Ovary (tissue), 10 donors: ENCODE measurements at regions of chr20 and their contacts with region 1.

Region 1: GRCh38 chr20:37790900-37791299 is 97.1 kb downstream of the CTNNBL1 start:
- DNase-seq: no peak
- H3K4me3 ChIP-seq: no peak overlapping the region
- H3K27ac ChIP-seq: no peak overlapping the region
- H3K4me1 ChIP-seq: no peaks in the 10 kb centered on the region
- H3K27me3 ChIP-seq: no peaks in the 10 kb centered on the region
- CTCF ChIP-seq: no peak
- EP300 ChIP-seq: no peak
- POLR2A ChIP-seq: no peak

Region 2: GRCh38 chr20:36835453-36836198 is 955.3 kb before region 1 on chr20:
- intact Hi-C with region 1: loop called in 1 of 4 experiments (anchors 5 kb)
- DNase-seq: peak; percentile 92 to 96 (median 94)
- H3K4me3 ChIP-seq: no peak overlapping the region
- H3K27ac ChIP-seq: peak overlapping the region; percentile 74
- H3K4me1 ChIP-seq: peaks cover 29% of the 10 kb centered on the region
- H3K27me3 ChIP-seq: no peaks in the 10 kb centered on the region
- CTCF ChIP-seq: no peak
- EP300 ChIP-seq: no peak
- POLR2A ChIP-seq: peak; percentile 61

Region 3: DNA sequence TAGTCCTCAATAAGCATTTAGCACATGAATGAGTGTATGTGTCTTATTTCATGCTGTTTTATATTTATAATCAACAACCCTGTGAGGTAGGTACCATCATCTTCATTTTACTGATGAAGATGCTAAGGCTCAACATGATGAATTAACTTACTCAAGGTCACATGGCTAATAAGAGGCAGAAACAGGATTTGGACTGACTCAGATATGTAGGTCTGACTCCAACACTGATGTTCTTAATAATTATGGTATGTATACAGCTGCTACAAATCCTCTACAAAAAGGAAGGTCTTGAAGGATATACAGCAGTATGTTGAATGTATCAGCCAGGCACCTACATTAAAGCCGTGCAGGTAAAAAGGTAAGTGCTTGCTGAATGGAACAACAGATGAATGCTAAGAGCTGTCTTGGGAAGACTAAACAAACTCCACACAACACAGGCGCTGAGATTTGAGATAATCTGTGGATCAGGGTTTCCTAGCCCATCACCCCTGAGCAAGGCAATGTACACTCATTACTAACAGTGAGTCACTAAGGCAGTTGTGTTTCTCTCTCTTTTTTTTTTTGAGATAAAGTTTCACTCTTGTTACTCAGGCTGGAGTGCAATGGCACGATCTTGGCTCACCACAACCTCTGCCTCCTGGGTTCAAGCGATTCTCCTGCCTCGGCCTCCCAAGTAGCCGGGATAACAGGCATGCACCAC is 210.4 kb after region 1 on chr20:
- intact Hi-C with region 1: no loop called
- DNase-seq: no peak
- H3K4me3 ChIP-seq: no peak overlapping the region
- H3K27ac ChIP-seq: no peak overlapping the region
- H3K4me1 ChIP-seq: peaks cover 6% of the 10 kb centered on the region
- H3K27me3 ChIP-seq: no peaks in the 10 kb centered on the region
- CTCF ChIP-seq: no peak
- EP300 ChIP-seq: no peak
- POLR2A ChIP-seq: no peak